PC-9 (cell line): ENCODE measurements at regions of chr3 and their contacts with region 1.

Region 1: DNA sequence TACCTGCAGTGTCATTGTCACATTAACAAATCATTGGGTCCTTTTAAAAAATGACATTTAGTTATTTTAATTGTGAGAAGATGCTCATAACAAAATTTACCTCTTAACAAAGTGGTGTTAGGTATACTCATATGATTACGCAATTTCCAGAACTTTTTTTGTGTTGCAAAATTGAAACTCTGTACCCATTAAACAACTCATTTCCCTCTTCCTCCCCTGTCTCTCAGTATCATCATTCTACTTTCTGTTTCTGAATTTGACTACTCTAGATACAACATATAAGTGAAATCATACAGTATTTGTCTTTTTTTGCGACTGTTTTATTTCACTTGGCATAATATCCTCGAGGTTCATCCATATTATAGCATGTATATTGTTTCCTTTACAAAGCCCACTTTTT is 58.7 kb upstream of the CHST2 start:
- DNase-seq: no peak
- H3K4me3 ChIP-seq: no peak overlapping the region
- H3K27ac ChIP-seq: no peak overlapping the region
- H3K4me1 ChIP-seq: no peaks in the 10 kb centered on the region
- H3K27me3 ChIP-seq: no peaks in the 10 kb centered on the region
- CTCF ChIP-seq: no peak

Region 2: GRCh38 chr3:143644370-143645089 is 583.6 kb after region 1 on chr3:
- CTCF ChIA-PET with region 1: no interaction called
- POLR2A ChIA-PET with region 1: no interaction called
- intact Hi-C with region 1: loop called (anchors 5 kb)
- DNase-seq: peak in 1 of 2 experiments; percentile 51
- H3K4me3 ChIP-seq: no peak overlapping the region
- H3K27ac ChIP-seq: no peak overlapping the region
- H3K4me1 ChIP-seq: no peaks in the 10 kb centered on the region
- H3K27me3 ChIP-seq: no peaks in the 10 kb centered on the region
- CTCF ChIP-seq: peak; percentile 61